ENCODE measurements at regions of chr11 and their contacts with region 1.

Region 1: GRCh38 chr11:66677599-66678375 is at the start of gene RBM4B:
- DNase-seq: peak; percentile 95 to 98 (median 97)
- H3K4me3 ChIP-seq: peak within 1 kb of the TSS; percentile 99
- H3K4me3 Mint-ChIP-seq: peak within 1 kb of the TSS; percentile 90 to 99 (median 95)
- H3K27ac ChIP-seq: peak within 1 kb of the TSS; percentile 100
- H3K27ac Mint-ChIP-seq: peak within 1 kb of the TSS; percentile 98 to 100 (median 100)
- H3K4me1 ChIP-seq: peaks cover 43% of the 10 kb centered on the region
- H3K4me1 Mint-ChIP-seq: peaks cover 34 to 50% (median 42%) of the 10 kb centered on the region in 3 donors
- H3K27me3 ChIP-seq: no peaks in the 10 kb centered on the region
- H3K27me3 Mint-ChIP-seq: no peaks in the 10 kb centered on the region
- total RNA-seq, gene RBM4B: 19.5 to 20.0 TPM

Region 2: GRCh38 chr11:66438504-66439466 is 239.0 kb before region 1 on chr11 and contains the start of gene MRPL11:
- CTCF ChIA-PET with region 1: interaction called, 12 read pairs
- POLR2A ChIA-PET with region 1: interaction called, 9 read pairs
- DNase-seq: peak; percentile 73 to 91 (median 86)
- H3K4me3 ChIP-seq: peak within 1 kb of the TSS; percentile 68
- H3K4me3 Mint-ChIP-seq: peak within 1 kb of the TSS; percentile 80 to 94 (median 92)
- H3K27ac ChIP-seq: peak within 1 kb of the TSS; percentile 67
- H3K27ac Mint-ChIP-seq: peak within 1 kb of the TSS; percentile 77 to 100 (median 97)
- H3K4me1 ChIP-seq: peaks cover 7% of the 10 kb centered on the region
- H3K4me1 Mint-ChIP-seq: peaks cover 8 to 16% (median 8%) of the 10 kb centered on the region in 3 donors
- H3K27me3 ChIP-seq: no peaks in the 10 kb centered on the region
- H3K27me3 Mint-ChIP-seq: peaks cover 1 to 10% of the 10 kb centered on the region in 2 donors
- total RNA-seq, gene MRPL11: 148 to 152 TPM

Region 3: GRCh38 chr11:66545701-66546367 is 132.0 kb before region 1 on chr11 and contains the start of gene ZDHHC24:
- CTCF ChIA-PET with region 1: interaction called, 11 read pairs
- POLR2A ChIA-PET with region 1: interaction called, 9 read pairs
- DNase-seq: peak; percentile 77 to 87 (median 82)
- H3K4me3 ChIP-seq: peak within 1 kb of the TSS; percentile 92
- H3K4me3 Mint-ChIP-seq: peak within 1 kb of the TSS; percentile 86 to 95 (median 92)
- H3K27ac ChIP-seq: peak within 1 kb of the TSS; percentile 75
- H3K27ac Mint-ChIP-seq: peak within 1 kb of the TSS; percentile 82 to 96 (median 94)
- H3K4me1 ChIP-seq: peaks cover 32% of the 10 kb centered on the region
- H3K4me1 Mint-ChIP-seq: peaks cover 34 to 50% (median 48%) of the 10 kb centered on the region in 3 donors
- H3K27me3 ChIP-seq: no peaks in the 10 kb centered on the region
- H3K27me3 Mint-ChIP-seq: peaks cover 0 to 6% of the 10 kb centered on the region in 2 donors
- total RNA-seq, gene ZDHHC24: 16.6 to 17.1 TPM

Region 4: DNA sequence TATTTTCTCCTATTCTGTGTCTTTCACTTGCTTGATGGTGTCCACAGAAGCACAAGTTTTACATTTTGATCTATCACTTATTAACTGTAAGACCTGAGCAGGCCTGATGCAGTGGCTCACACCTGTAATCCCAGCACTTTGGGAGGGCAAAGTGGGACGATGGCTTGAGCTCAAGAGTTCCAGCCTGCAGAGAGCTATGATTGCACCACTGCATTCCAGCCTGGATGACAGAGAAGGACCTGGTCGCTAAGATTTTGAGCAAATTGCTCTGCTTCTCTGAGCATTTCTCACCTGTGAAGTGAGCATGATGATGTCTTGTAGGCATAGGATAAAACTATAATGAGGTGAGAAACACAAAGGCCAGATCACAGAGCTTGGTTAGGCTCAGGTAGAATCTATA is 91.7 kb before region 1 on chr11:
- CTCF ChIA-PET with region 1: interaction called, 135 read pairs
- POLR2A ChIA-PET with region 1: interaction called, 7 read pairs
- DNase-seq: no peak
- H3K4me3 ChIP-seq: no peak overlapping the region
- H3K4me3 Mint-ChIP-seq: no peak overlapping the region
- H3K27ac ChIP-seq: no peak overlapping the region
- H3K27ac Mint-ChIP-seq: peak overlapping the region in 1 of 8 donors; percentile 52
- H3K4me1 ChIP-seq: no peaks in the 10 kb centered on the region
- H3K4me1 Mint-ChIP-seq: no peaks in the 10 kb centered on the region
- H3K27me3 ChIP-seq: no peaks in the 10 kb centered on the region
- H3K27me3 Mint-ChIP-seq: peaks cover 0 to 3% of the 10 kb centered on the region in 2 donors

Region 5: GRCh38 chr11:66638177-66639065 is 39.4 kb before region 1 on chr11 and contains the start of gene RBM4:
- CTCF ChIA-PET with region 1: interaction called, 30 read pairs
- POLR2A ChIA-PET with region 1: interaction called, 41 read pairs
- DNase-seq: peak; percentile 92 to 99 (median 97)
- H3K4me3 ChIP-seq: peak within 1 kb of the TSS; percentile 92
- H3K4me3 Mint-ChIP-seq: peak within 1 kb of the TSS; percentile 93 to 100 (median 97)
- H3K27ac ChIP-seq: peak within 1 kb of the TSS; percentile 92
- H3K27ac Mint-ChIP-seq: peak within 1 kb of the TSS; percentile 93 to 99 (median 98)
- H3K4me1 ChIP-seq: peaks cover 45% of the 10 kb centered on the region
- H3K4me1 Mint-ChIP-seq: peaks cover 63 to 73% (median 70%) of the 10 kb centered on the region in 3 donors
- H3K27me3 ChIP-seq: no peaks in the 10 kb centered on the region
- H3K27me3 Mint-ChIP-seq: peaks cover 0 to 6% of the 10 kb centered on the region in 2 donors
- total RNA-seq, gene RBM4: 115 to 124 TPM

Region 6: DNA sequence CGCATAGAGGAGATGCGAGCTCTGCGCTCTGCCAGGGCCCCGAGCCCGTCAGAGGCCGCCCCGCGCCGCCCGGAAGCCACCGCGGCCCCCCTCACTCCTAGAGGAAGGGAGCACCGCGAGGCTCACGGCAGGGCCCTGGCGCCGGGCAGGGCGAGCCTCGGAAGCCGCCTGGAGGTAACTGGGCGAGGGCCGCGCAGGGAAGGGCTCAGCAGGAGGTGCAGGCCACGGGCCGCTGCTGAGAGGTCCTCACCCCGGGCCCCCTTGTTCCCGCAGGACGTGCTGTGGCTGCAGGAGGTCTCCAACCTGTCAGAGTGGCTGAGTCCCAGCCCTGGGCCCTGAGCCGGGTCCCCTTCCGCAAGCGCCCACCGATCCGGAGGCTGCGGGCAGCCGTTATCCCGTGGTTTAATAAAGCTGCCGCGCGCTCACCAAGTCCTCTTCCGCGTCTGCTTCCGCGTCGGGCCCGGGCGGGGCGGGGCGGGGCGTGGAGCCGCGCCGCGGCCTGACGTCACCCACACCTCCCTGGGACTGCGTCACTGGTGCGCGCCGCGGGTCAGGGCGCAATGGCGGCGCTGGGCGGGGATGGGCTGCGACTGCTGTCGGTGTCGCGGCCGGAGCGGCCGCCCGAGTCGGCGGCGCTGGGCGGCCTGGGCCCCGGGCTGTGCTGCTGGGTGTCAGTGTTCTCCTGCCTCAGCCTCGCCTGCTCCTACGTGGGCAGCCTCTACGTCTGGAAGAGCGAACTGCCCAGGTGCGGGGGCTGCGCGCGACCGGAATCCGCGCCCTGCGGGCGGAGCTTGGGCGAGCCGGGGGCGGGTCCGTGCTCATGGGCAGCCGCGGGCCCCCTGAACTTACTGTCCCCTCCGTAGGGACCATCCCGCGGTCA is 165.3 kb after region 1 on chr11 and contains the start of gene RCE1:
- CTCF ChIA-PET with region 1: interaction called, 3 read pairs
- POLR2A ChIA-PET with region 1: interaction called, 16 read pairs
- DNase-seq: peak; percentile 87 to 94 (median 89)
- H3K4me3 ChIP-seq: peak within 1 kb of the TSS; percentile 91
- H3K4me3 Mint-ChIP-seq: peak within 1 kb of the TSS; percentile 82 to 98 (median 92)
- H3K27ac ChIP-seq: peak within 1 kb of the TSS; percentile 98
- H3K27ac Mint-ChIP-seq: peak within 1 kb of the TSS; percentile 96 to 99 (median 97)
- H3K4me1 ChIP-seq: peaks cover 44% of the 10 kb centered on the region
- H3K4me1 Mint-ChIP-seq: peaks cover 42 to 59% (median 44%) of the 10 kb centered on the region in 3 donors
- H3K27me3 ChIP-seq: no peaks in the 10 kb centered on the region
- H3K27me3 Mint-ChIP-seq: peaks cover 0 to 1% of the 10 kb centered on the region in 2 donors
- total RNA-seq, gene RCE1: 34.1 to 41.2 TPM

Measured in CD8-positive, alpha-beta memory T cell (primary cell).